Transverse colon (tissue), 4 donors: ENCODE measurements at regions of chr12 and their contacts with region 1.

Region 1: DNA sequence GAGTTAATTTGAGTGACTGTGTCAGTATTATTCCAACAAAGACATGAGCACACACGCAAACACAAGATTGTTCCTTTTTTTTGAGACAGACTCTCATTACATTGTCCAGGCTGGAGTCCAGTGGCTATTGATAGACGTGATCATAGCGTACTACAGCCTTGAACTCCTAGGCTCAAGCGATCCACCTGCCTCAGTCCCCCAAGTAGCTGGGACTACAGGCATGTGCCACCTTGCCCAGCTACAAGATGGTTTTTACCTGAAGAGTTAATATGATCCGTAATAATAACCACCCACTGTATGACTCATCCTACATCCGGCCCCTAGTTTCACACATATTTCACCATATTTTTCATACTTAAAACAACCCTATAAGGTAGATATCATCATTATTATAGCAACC is 26.8 kb downstream of the BCAT1 start:
- DNase-seq: no peak
- H3K4me3 ChIP-seq: no peak overlapping the region
- H3K27ac ChIP-seq: no peak overlapping the region
- H3K4me1 ChIP-seq: no peaks in the 10 kb centered on the region
- H3K27me3 ChIP-seq: no peaks in the 10 kb centered on the region
- CTCF ChIP-seq: no peak
- EP300 ChIP-seq: no peak
- POLR2A ChIP-seq: no peak

Region 2: GRCh38 chr12:24088751-24089509 is 833.2 kb before region 1 on chr12:
- in situ Hi-C with region 1: no loop called
- intact Hi-C with region 1: loop called (anchors 10 kb)
- DNase-seq: no peak
- H3K4me3 ChIP-seq: no peak overlapping the region
- H3K27ac ChIP-seq: no peak overlapping the region
- H3K4me1 ChIP-seq: no peaks in the 10 kb centered on the region
- H3K27me3 ChIP-seq: no peaks in the 10 kb centered on the region
- CTCF ChIP-seq: no peak
- EP300 ChIP-seq: no peak
- POLR2A ChIP-seq: no peak